ENCODE measurements at regions of chr22 and their contacts with region 1.

Region 1: DNA sequence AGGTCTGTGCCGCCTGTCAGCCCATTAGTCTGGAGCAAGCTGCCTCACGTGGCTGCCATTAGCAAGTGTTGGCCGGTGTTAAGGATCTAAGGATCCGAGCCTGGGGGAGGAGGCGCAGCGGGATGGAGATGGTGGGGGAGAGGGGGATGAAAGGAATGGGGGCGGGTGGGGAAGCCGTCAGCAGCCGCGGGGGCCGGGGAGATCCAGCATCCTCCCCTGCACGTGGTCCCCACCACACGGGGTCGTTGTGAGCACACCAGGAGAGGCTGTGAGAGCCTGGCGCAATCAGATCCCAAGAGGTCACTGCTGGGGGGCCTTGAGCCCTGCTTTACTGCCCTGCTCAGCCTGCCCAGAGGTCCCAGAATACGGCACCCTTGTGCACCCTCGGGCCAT is 7.3 kb downstream of the CABP7 start:
- DNase-seq: peak; percentile 29 to 44 (median 43)
- H3K4me3 ChIP-seq: no peak overlapping the region
- H3K27ac ChIP-seq: no peak overlapping the region
- H3K4me1 ChIP-seq: no peaks in the 10 kb centered on the region
- H3K27me3 ChIP-seq: peaks cover 0 to 33% (median 10%) of the 10 kb centered on the region in 5 experiments

Region 2: DNA sequence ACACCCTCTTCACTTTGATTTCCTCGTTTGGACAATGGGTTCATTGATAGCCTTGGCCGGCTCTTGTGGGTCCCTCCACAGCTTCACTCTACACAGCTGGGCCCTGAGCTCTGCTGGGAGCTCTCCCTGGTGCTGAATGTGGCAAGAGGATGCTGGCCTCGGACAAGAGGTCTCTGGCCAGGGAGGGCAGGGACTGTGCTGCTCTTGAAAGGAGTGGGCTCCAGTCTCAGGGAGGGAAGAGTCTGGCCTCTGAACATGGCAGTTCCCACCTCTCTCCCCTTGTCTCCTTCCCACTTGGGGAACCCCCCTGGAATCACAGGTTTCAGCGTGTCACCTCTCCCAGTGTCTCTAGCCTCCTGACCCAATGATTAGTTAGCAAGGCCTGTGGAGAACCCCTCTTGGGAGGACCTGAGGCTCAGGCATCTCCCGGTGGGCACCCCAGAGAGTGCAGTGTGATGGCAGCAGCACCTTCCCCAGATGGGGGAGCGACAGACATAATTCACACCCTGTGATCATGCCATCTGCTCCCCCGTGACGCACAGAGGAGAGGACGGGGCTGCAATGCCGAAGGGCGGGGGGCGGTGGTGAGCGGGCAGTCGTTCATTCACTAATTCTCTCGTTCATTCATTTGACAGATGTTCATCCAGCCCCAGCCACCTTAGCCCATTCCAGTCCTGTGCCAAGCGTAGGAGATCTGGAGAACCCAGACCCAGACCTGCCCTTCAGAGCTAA is 10.1 kb before region 1 on chr22:
- CTCF ChIA-PET with region 1: interaction called, 12 read pairs
- POLR2A ChIA-PET with region 1: no interaction called
- DNase-seq: peak; percentile 47 to 76 (median 72)
- H3K4me3 ChIP-seq: no peak overlapping the region
- H3K27ac ChIP-seq: no peak overlapping the region
- H3K4me1 ChIP-seq: peaks cover 0 to 14% (median 4%) of the 10 kb centered on the region in 4 experiments
- H3K27me3 ChIP-seq: peaks cover 0 to 66% (median 25%) of the 10 kb centered on the region in 5 experiments

Measured in common myeloid progenitor, CD34-positive (primary cell).